ENCODE measurements at regions of chr6 and their contacts with region 1.

Region 1: DNA sequence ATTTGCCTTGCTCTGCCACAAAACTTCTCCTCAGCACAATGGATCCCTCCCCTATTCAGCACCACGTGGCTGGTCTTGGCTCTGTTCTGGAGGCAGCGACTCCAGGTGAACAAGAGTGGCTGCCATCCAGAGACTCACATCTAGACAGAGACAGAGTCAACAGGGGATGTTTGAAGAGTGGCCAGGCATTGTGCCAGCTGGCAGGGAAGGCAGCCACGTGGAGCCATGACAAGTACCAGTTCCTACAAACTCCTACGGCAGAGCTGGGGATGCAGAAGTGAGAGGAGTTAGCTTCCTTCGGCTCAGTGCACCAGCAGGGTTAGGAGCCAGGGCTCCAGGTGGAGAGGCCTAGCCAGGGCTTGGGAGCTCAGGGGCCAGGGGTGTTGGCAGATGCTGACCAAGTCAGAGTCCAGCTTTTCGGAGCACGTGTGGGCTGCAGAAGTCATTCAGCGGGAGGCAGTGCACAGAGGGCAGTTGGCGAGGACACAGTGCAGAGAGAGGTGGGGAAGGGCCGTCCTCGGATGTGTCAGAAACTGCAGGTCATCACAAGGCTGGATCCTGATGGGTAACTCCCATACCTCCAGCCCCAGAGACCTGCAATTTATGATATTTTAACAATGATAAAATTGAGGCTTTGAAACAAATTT is 171.7 kb upstream of the PDE10A start:
- DNase-seq: no peak
- H3K4me3 ChIP-seq: no peak overlapping the region
- H3K27ac ChIP-seq: no peak overlapping the region
- H3K4me1 ChIP-seq: peaks cover 0 to 20% (median 0%) of the 10 kb centered on the region in 6 donors
- H3K27me3 ChIP-seq: peaks cover 0 to 47% (median 7%) of the 10 kb centered on the region in 7 donors
- CTCF ChIP-seq: no peak
- POLR2A ChIP-seq: no peak

Region 2: DNA sequence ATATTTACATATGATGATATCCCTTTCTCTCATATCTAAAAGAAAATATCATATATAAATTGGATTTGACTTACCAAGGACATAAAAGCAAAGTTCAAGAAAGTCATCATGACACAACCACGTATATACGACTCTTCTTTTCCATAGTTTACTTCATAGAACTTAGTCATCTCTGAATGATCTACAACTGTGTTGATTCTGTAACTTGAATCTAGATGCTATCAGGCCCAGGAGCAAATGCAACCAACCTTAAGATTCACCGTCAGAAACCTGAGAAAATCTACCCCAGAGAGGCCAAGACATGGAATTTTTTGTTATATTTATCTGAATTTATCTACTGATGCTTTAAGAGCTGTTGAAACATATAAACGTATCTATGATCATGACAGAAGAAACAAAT is 337.3 kb before region 1 on chr6:
- intact Hi-C with region 1: no loop called
- DNase-seq: no peak
- H3K4me3 ChIP-seq: no peak overlapping the region
- H3K27ac ChIP-seq: no peak overlapping the region
- H3K4me1 ChIP-seq: no peaks in the 10 kb centered on the region
- H3K27me3 ChIP-seq: no peaks in the 10 kb centered on the region
- CTCF ChIP-seq: no peak
- POLR2A ChIP-seq: no peak

Region 3: DNA sequence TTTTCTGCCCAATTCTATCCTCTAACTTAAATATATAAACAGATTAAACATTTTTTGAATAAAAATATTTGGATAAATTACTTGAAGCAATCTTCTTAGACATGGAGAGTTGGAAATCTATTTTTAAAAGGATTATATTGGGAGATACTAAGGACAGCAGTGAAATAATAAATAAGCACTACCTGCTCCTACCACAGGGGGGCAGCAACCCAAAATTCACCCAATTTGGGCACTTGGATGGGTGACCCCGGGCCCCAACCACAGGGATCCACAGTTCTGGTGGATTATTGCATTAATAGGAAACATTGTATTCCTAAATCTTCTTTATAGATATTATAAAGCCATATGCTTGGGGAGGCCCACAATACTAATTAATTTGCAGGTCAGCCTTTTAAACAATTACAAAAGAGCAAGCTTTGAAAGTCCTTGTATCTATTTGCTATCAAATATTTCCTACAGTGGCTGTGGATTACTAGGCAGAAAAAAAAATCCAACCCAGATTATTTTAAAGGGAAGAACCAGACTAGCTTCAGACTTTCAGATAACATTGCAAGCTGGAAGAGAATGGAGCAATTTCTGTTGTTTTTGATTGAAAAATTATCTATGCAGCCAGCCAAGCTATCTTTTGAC is 105.3 kb before region 1 on chr6:
- intact Hi-C with region 1: loop called (anchors 10 kb)
- DNase-seq: no peak
- H3K4me3 ChIP-seq: no peak overlapping the region
- H3K27ac ChIP-seq: no peak overlapping the region
- H3K4me1 ChIP-seq: no peaks in the 10 kb centered on the region
- H3K27me3 ChIP-seq: peaks cover 0 to 20% (median 0%) of the 10 kb centered on the region in 7 donors
- CTCF ChIP-seq: peak in 10 of 11 experiments; percentile 16 to 77 (median 55)
- POLR2A ChIP-seq: no peak

Region 4: DNA sequence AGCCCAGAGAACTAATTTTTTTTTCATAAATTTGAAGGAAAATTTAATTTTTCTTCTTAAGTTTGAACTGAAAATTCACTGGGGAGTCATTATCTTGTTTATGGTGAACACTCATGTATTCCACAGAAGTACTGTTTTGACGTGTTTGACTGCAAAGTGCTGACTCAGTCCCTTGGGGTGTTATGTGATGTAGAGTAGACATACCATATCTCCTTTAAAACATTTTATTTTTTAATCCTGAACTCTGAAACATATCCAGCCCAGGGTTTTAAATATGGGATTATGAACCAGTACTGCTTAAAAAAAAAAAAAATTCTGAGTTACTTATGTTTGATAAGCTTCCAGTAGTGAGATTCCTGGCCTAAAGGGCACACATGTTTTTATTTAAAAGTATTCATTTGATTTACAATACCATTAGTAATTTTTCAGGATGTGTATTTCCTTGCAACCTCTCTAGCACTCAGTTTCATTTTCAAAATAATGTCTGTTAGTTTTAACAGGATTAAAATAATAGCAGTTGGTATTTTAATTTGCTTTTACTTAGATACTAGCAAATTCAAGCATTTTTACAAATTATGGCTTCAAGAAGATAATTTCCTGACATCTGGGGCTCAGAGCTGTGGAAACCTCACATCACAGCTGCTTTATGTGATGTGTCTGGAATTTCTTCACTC is 90.0 kb before region 1 on chr6:
- intact Hi-C with region 1: no loop called
- DNase-seq: no peak
- H3K4me3 ChIP-seq: no peak overlapping the region
- H3K27ac ChIP-seq: no peak overlapping the region
- H3K4me1 ChIP-seq: no peaks in the 10 kb centered on the region
- H3K27me3 ChIP-seq: no peaks in the 10 kb centered on the region
- CTCF ChIP-seq: no peak
- POLR2A ChIP-seq: no peak

Region 5: DNA sequence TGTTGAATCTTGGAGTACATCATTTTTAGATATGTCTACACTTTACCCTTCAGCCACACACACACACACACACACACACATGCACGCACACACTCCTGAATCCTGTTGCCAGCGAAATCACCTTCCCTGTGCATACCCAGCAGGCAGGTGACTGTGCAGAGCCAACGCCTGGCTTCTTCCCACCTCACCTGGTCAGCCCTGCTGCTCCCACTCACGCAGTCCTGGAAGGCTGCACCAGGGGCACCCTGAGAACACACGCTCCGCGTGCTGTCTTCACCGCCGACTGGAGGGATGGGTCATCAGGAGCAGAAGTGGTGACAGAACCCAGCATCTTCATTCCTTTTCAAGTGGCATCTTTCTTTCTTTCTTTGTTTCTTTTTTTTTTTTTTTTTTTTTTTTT is 238.3 kb after region 1 on chr6:
- intact Hi-C with region 1: no loop called
- DNase-seq: no peak
- H3K4me3 ChIP-seq: no peak overlapping the region
- H3K27ac ChIP-seq: no peak overlapping the region
- H3K4me1 ChIP-seq: no peaks in the 10 kb centered on the region
- H3K27me3 ChIP-seq: peaks cover 0 to 22% (median 0%) of the 10 kb centered on the region in 7 donors
- CTCF ChIP-seq: no peak
- POLR2A ChIP-seq: no peak

Measured in spleen (tissue), 13 donors.